Mammary epithelial cell (primary cell): ENCODE measurements at regions of chr2 and their contacts with region 1.

Region 1: DNA sequence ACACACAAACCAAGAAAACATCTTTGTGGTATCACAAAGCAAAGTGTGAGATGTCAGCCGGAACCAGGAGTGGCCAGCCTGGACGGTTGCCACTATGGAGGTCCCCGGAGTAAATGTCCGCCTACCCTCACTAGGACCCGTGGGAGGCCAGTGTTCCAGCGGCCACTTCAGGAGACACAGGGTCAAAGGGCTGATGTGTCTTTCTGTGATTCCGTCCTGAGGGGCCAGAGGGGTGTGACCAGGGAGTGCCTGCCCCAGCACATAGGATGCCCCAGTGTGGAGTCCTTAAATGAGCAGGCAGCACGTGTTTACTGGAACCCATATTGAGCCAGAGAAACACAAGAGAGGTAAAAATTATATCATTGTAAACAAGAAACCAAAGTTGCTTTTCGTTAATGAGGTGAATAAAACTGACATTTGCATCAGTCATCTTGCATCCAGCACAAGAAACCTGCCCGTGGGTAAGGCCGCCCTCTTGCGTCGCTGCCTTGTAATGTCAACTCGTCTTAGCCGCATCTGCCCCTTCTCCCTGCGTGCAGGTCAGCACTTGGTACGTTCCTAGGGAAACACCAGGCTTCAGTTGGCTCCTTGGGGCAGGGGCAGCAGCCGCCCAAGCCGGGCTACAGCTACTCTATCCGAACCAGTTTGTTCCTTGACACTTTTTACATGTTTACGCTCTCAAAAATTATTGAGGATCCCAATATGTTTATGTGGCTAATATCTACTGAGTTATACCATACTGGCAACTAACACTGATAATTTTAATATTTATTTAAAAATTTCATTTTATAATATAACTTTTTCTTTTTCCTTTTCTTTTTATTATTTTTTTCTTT is 46.7 kb upstream of the LAPTM4A start:
- DNase-seq: peak; percentile 76
- H3K4me3 ChIP-seq: no peak overlapping the region
- H3K27ac ChIP-seq: no peak overlapping the region
- H3K4me1 ChIP-seq: peaks cover 23% of the 10 kb centered on the region
- H3K27me3 ChIP-seq: no peaks in the 10 kb centered on the region
- CTCF ChIP-seq: peak; percentile 93 to 96

Region 2: GRCh38 chr2:19774805-19775176 is 323.3 kb before region 1 on chr2:
- CTCF ChIA-PET with region 1: no interaction called
- dilution Hi-C with region 1: no loop called
- in situ Hi-C with region 1: no loop called
- intact Hi-C with region 1: loop called (anchors 10 kb)
- DNase-seq: no peak
- H3K4me3 ChIP-seq: no peak overlapping the region
- H3K27ac ChIP-seq: no peak overlapping the region
- H3K4me1 ChIP-seq: no peaks in the 10 kb centered on the region
- H3K27me3 ChIP-seq: peaks cover 5% of the 10 kb centered on the region
- CTCF ChIP-seq: no peak

Region 3: DNA sequence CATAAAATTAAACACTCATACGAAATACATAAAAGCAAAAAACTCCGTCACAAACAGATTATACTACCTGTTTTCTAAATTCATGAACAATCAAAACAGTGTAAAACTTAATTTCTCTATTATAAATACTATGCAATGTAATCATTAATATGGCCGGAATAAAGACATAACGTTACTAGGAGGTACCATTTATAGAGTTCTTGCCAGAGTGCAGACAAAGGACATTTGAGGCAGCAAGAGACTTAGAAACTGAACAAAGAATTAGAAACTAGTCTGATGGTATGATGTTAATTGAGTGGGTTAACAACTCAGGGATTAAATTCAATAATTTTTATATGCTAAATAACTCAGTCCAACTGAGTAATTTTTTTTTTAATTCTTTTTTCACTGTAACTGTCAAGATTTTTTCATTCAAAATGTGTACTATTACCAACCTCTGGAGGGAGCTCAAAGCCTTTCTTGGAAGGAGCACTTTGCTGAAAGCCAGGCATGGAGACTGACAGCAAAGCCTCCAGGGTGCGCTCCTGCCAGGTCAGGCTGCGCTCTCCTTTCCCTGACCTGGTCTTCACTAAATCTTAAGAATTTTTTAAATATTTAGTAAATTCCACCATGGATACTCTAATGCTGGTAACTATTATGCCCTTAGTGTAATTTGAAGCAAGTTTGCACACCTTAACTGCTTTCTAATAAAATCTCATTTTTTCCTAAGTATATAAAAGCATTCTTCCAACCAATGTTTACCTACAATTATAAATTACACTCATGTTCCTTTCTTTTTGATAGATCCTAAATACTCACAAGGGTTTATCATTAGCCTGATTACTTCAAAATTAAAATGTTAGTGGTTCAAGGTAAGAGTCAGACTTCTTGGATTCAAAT is 142.3 kb before region 1 on chr2:
- CTCF ChIA-PET with region 1: no interaction called
- dilution Hi-C with region 1: loop called (anchors 5 kb)
- in situ Hi-C with region 1: loop called in 1 of 2 experiments (anchors 5 kb)
- intact Hi-C with region 1: loop called (anchors 1 kb)
- DNase-seq: peak; percentile 49
- H3K4me3 ChIP-seq: no peak overlapping the region
- H3K27ac ChIP-seq: no peak overlapping the region
- H3K4me1 ChIP-seq: no peaks in the 10 kb centered on the region
- H3K27me3 ChIP-seq: no peaks in the 10 kb centered on the region
- CTCF ChIP-seq: peak; percentile 85 to 87

Region 4: GRCh38 chr2:19989681-19990415 is 108.2 kb before region 1 on chr2 and contains the start of gene WDR35:
- CTCF ChIA-PET with region 1: no interaction called
- dilution Hi-C with region 1: no loop called
- in situ Hi-C with region 1: no loop called
- intact Hi-C with region 1: loop called (anchors 1 kb)
- DNase-seq: peak; percentile 88
- H3K4me3 ChIP-seq: peak within 1 kb of the TSS; percentile 67 to 91 (median 75)
- H3K27ac ChIP-seq: peak within 1 kb of the TSS; percentile 45
- H3K4me1 ChIP-seq: peaks cover 9% of the 10 kb centered on the region
- H3K27me3 ChIP-seq: no peaks in the 10 kb centered on the region
- CTCF ChIP-seq: no peak
- total RNA-seq, gene WDR35: 8.8 to 11.5 TPM

Region 5: DNA sequence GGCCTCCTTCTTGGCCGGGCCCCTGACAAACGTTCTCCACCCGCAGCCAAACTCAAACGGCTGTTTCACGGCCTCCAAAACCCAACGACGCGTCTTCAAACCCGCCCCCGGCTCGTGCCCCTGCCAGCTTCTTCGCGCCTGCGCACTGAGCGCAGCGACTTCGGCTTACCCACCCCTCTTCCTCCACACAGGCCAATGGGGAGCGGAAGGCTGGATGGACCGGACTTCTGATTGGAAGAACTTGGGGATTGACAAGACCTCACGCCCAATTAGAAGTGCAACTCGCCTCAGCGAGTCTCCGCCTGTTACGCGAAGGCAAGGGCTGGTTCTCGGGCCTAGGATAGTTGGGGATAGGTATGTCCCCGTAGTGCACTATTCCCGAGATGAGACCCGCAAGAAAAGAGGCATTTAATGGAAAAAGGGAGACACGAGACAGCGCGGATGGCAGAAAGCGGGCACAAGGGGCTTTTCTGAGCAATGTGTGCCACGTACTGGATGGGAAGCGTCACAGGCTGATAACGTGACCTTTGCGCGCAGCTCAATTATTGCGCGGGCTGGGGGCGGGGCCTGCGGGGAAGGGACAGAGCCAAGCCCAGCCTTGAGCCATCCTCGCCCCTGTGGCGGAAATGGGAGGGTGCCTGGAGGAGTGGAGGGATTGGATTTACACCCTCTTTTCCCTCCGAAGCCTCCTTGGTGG is 46.4 kb before region 1 on chr2 and contains the start of gene LAPTM4A:
- CTCF ChIA-PET with region 1: no interaction called
- dilution Hi-C with region 1: no loop called
- in situ Hi-C with region 1: no loop called
- intact Hi-C with region 1: loop called (anchors 1 kb)
- DNase-seq: peak; percentile 100
- H3K4me3 ChIP-seq: peak within 1 kb of the TSS; percentile 75 to 97 (median 87)
- H3K27ac ChIP-seq: peak within 1 kb of the TSS; percentile 93
- H3K4me1 ChIP-seq: peaks cover 22% of the 10 kb centered on the region
- H3K27me3 ChIP-seq: no peaks in the 10 kb centered on the region
- CTCF ChIP-seq: peak in 1 of 2 donors; percentile 3
- total RNA-seq, gene LAPTM4A: 160 to 162 TPM